MCF 10A (cell line): ENCODE measurements at regions of chr9 and their contacts with region 1.

Region 1: DNA sequence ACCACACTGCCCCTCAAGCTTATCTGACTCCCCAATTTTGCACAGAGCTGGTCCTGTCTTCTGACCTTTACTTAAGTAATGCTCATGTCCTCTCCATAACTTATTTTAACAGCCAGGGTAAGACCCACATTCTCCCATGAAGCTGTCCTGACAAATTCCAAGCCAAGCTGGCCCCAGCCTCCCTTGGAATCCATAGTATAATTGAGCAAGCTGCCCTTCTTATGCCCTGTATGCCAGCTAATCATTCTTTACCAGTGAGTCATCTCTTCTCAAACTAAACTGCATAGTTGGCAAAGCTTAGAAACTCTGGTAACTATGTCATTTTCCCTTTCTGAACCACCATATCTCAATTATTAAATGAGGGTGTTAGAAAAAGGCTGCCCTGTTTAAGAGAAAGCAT is 92.4 kb downstream of the NFIB start:
- DNase-seq: peak; percentile 90
- H3K4me3 Mint-ChIP-seq: peak overlapping the region; percentile 41
- H3K27ac Mint-ChIP-seq: peak overlapping the region; percentile 83
- H3K4me1 Mint-ChIP-seq: peaks cover 30% of the 10 kb centered on the region
- H3K27me3 Mint-ChIP-seq: no peaks in the 10 kb centered on the region
- CTCF ChIP-seq: no peak

Region 2: DNA sequence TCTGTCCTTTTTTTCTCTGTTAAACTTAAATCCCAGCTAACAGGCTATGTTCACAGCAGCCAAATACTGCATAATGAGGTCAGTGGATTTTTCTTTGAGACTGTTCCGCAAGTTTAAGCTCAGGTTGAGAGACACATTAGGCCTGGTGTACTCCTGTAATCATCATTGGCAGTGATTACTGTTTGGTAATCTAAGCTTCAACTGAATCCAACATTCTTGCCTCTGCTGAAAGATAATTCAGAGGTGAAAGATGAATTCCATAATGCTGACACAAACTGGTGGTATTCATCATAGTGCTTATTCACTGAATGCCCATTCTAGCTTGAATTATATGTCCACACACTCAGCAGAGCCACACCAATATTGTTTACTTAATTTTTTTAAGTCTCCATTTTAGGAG is 16.1 kb before region 1 on chr9:
- CTCF ChIA-PET with region 1: interaction called, 3 read pairs
- POLR2A ChIA-PET with region 1: interaction called, 16 read pairs
- intact Hi-C with region 1: no loop called
- DNase-seq: peak; percentile 70
- H3K4me3 Mint-ChIP-seq: no peak overlapping the region
- H3K27ac Mint-ChIP-seq: peak overlapping the region; percentile 57
- H3K4me1 Mint-ChIP-seq: peaks cover 40% of the 10 kb centered on the region
- H3K27me3 Mint-ChIP-seq: no peaks in the 10 kb centered on the region
- CTCF ChIP-seq: no peak

Region 3: DNA sequence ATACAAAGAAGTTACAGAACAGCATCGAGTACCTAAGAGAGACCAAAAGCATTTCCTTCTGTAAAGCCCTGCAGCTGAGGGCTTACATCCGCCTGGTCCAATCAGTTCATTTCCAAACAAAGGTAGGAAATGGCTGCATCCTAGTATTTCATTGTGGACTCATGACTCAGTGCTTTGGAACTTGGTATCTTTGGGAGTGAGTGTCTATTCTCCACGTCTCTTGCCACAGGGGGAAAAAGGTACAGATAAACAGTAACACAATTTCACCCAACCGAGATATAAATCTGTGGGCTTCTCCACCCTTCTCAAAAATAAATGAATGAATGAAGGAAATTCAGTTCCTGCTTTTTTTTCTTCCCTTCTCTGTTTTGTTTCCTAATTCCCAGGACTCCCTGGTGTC is 17.0 kb after region 1 on chr9:
- CTCF ChIA-PET with region 1: no interaction called
- POLR2A ChIA-PET with region 1: interaction called, 56 read pairs
- intact Hi-C with region 1: no loop called
- DNase-seq: peak; percentile 86
- H3K4me3 Mint-ChIP-seq: peak overlapping the region; percentile 66
- H3K27ac Mint-ChIP-seq: peak overlapping the region; percentile 84
- H3K4me1 Mint-ChIP-seq: peaks cover 42% of the 10 kb centered on the region
- H3K27me3 Mint-ChIP-seq: no peaks in the 10 kb centered on the region
- CTCF ChIP-seq: no peak

Region 4: GRCh38 chr9:14281136-14281795 is 59.7 kb after region 1 on chr9:
- CTCF ChIA-PET with region 1: no interaction called
- POLR2A ChIA-PET with region 1: no interaction called
- intact Hi-C with region 1: no loop called
- DNase-seq: no peak
- H3K4me3 Mint-ChIP-seq: no peak overlapping the region
- H3K27ac Mint-ChIP-seq: no peak overlapping the region
- H3K4me1 Mint-ChIP-seq: peaks cover 50% of the 10 kb centered on the region
- H3K27me3 Mint-ChIP-seq: no peaks in the 10 kb centered on the region
- CTCF ChIP-seq: no peak